Dorsolateral prefrontal cortex (tissue), 120 donors: ENCODE measurements at regions of chr18 and their contacts with region 1.

Region 1: GRCh38 chr18:63016270-63016669 is 300.9 kb downstream of the PHLPP1 start:
- DNase-seq: peak in 5 of 10 donors; percentile 42 to 63 (median 49)
- H3K4me3 ChIP-seq: no peak overlapping the region
- H3K27ac ChIP-seq: no peak overlapping the region
- H3K27me3 ChIP-seq: peaks cover 0 to 3% (median 0%) of the 10 kb centered on the region in 45 donors
- CTCF ChIP-seq: peak; percentile 73 to 94 (median 85)

Region 2: GRCh38 chr18:62976227-62976626 is 40.0 kb before region 1 on chr18:
- intact Hi-C with region 1: no loop called
- DNase-seq: no peak
- H3K4me3 ChIP-seq: peak overlapping the region in 1 of 59 donors; percentile 9
- H3K27ac ChIP-seq: peak overlapping the region in 57 of 59 donors; percentile 4 to 99 (median 93)
- H3K27me3 ChIP-seq: no peaks in the 10 kb centered on the region
- CTCF ChIP-seq: no peak

Region 3: GRCh38 chr18:63119647-63120046 is 103.4 kb after region 1 on chr18:
- intact Hi-C with region 1: loop called in 1 of 2 experiments (anchors 10 kb)
- DNase-seq: peak in 8 of 10 donors; percentile 24 to 75 (median 64)
- H3K4me3 ChIP-seq: no peak overlapping the region
- H3K27ac ChIP-seq: no peak overlapping the region
- H3K27me3 ChIP-seq: peaks cover 0 to 5% (median 0%) of the 10 kb centered on the region in 45 donors
- CTCF ChIP-seq: peak; percentile 18 to 81 (median 64)

Region 4: DNA sequence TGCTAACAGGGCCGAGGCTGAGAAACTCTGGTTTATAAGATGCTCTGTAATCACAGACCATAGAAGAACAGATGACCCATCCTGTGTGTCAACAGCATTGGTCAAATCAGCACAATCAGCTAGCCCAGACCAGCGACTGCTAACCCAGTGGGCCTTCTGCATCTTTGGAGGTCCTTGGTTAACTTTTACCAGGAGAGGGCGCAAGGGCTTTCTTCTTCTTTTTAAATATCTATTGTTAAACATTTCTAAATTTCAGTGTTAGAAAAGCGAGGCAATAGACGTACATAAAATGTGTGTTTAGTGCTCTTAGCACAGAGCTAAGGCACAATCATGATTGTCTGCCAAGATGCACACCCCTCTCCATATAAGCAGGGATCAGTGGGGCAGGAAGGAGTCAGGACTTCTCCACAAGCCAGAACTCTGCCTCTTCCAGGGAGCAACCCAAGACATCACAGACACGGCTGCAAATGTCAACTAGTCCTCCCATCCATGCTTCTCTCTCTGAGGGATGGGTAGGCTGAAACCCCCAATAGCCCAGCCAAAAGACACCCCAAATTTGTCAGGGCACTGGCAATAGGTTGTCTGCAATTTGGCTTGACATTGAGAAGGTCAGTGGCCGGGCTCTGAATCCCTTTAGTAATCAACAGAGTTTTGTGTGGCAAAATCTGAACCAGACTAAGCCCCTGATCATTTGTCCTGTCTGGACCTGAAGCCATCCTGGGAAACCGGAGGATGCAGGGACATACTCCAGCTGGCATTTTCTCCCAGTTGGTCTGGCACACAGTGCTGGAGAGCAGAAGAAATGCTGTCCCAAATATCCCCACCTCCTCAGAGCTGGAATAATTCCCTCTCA is 115.1 kb after region 1 on chr18:
- intact Hi-C with region 1: loop called in 1 of 2 experiments (anchors 5 kb)
- DNase-seq: peak in 2 of 10 donors; percentile 53 to 71
- H3K4me3 ChIP-seq: peak overlapping the region in 2 of 59 donors; percentile 4 to 8
- H3K27ac ChIP-seq: peak overlapping the region in 35 of 59 donors; percentile 7 to 67 (median 41)
- H3K27me3 ChIP-seq: no peaks in the 10 kb centered on the region
- CTCF ChIP-seq: peak; percentile 22 to 79 (median 66)

Region 5: GRCh38 chr18:63439334-63439733 is 423.1 kb after region 1 on chr18:
- intact Hi-C with region 1: loop called (anchors 5 kb)
- DNase-seq: peak in 4 of 10 donors; percentile 15 to 51 (median 42)
- H3K4me3 ChIP-seq: peak overlapping the region in 2 of 59 donors; percentile 14 to 25
- H3K27ac ChIP-seq: no peak overlapping the region
- H3K27me3 ChIP-seq: peaks cover 0 to 4% (median 0%) of the 10 kb centered on the region in 45 donors
- CTCF ChIP-seq: peak; percentile 42 to 95 (median 79)

Region 6: GRCh38 chr18:63444567-63444966 is 428.3 kb after region 1 on chr18:
- intact Hi-C with region 1: loop called (anchors 5 kb)
- DNase-seq: no peak
- H3K4me3 ChIP-seq: no peak overlapping the region
- H3K27ac ChIP-seq: no peak overlapping the region
- H3K27me3 ChIP-seq: no peaks in the 10 kb centered on the region
- CTCF ChIP-seq: no peak

Region 7: GRCh38 chr18:63553117-63553516 is 536.8 kb after region 1 on chr18:
- intact Hi-C with region 1: no loop called
- DNase-seq: no peak
- H3K4me3 ChIP-seq: no peak overlapping the region
- H3K27ac ChIP-seq: no peak overlapping the region
- H3K27me3 ChIP-seq: no peaks in the 10 kb centered on the region
- CTCF ChIP-seq: no peak